Spleen (tissue), 13 donors: ENCODE measurements at regions of chr18 and their contacts with region 1.

Region 1: GRCh38 chr18:46073474-46074331 is 1.6 kb upstream of the PSTPIP2 start:
- DNase-seq: peak; percentile 50
- H3K4me3 ChIP-seq: peak overlapping the region in 1 of 8 donors; percentile 92
- H3K27ac ChIP-seq: peak overlapping the region in 6 of 8 donors; percentile 92 to 97 (median 94)
- H3K4me1 ChIP-seq: peaks cover 12 to 55% (median 46%) of the 10 kb centered on the region in 6 donors
- H3K27me3 ChIP-seq: peaks cover 0 to 20% (median 0%) of the 10 kb centered on the region in 7 donors
- CTCF ChIP-seq: peak; percentile 38 to 83 (median 72)
- POLR2A ChIP-seq: no peak

Region 2: GRCh38 chr18:45335282-45336043 is 738.2 kb before region 1 on chr18:
- intact Hi-C with region 1: no loop called
- DNase-seq: no peak
- H3K4me3 ChIP-seq: no peak overlapping the region
- H3K27ac ChIP-seq: no peak overlapping the region
- H3K4me1 ChIP-seq: no peaks in the 10 kb centered on the region
- H3K27me3 ChIP-seq: no peaks in the 10 kb centered on the region
- CTCF ChIP-seq: no peak
- POLR2A ChIP-seq: no peak

Region 3: DNA sequence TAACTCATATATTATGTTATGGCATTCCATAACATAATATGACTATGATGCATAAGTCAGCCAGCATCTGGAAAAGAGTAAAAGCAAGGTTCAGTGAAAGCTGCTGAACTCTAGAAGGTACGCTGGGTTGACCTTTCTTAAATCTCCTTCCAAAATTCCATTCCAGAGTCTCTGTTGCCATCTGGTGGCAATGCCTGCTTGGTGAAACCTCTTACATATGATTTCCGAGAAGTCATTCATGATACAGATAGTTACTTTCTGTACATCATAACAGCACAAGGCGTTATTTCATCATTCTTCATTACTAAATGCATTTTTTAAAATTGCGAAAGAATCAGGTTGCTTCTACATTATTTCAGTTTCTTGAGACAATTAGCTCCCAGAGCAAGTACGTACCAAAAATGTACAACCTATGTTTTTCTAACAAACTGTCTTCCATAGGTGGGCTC is 99.6 kb before region 1 on chr18:
- intact Hi-C with region 1: loop called (anchors 10 kb)
- DNase-seq: no peak
- H3K4me3 ChIP-seq: peak overlapping the region in 1 of 8 donors; percentile 3
- H3K27ac ChIP-seq: peak overlapping the region in 7 of 8 donors; percentile 33 to 82 (median 59)
- H3K4me1 ChIP-seq: peaks cover 4 to 37% (median 10%) of the 10 kb centered on the region in 6 donors
- H3K27me3 ChIP-seq: no peaks in the 10 kb centered on the region
- CTCF ChIP-seq: peak; percentile 50 to 92 (median 77)
- POLR2A ChIP-seq: no peak

Region 4: DNA sequence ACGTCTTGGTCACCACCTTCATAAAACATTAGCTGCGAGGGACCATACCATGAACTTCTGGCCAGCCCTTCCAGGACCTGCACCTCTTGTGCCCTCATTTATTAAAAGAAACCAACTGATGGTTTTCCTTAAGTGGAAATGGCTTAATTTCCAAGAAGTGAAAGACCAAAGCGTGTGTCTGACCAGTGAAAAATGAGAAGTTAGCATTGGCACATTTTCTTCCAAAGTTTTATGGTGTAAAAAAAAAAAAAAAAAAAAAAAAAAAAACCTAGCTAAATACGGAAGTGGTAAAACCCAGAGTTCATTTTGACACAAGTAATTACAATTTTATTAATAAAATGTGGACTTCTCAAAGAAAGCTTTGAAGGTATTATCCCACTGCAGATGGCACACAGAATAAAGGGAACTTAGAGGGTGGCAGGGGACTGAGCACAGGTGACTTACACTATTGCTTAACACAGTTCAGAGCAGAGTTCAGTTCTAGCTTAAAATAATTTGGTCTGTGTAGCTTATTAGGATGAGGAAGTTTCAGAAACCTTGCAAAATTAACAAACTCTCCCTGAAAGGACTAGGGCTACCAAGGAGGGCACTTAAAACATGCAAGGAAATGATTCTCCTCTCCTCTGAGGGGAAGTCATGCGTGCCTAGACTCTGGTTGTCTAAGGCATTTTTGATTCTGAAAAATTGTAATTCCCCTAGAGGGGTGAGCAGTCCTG is 64.4 kb before region 1 on chr18:
- intact Hi-C with region 1: no loop called
- DNase-seq: no peak
- H3K4me3 ChIP-seq: peak overlapping the region in 1 of 8 donors; percentile 21
- H3K27ac ChIP-seq: peak overlapping the region in 7 of 8 donors; percentile 53 to 88 (median 82)
- H3K4me1 ChIP-seq: peaks cover 0 to 60% (median 27%) of the 10 kb centered on the region in 6 donors
- H3K27me3 ChIP-seq: no peaks in the 10 kb centered on the region
- CTCF ChIP-seq: no peak
- POLR2A ChIP-seq: no peak

Region 5: GRCh38 chr18:46677611-46678010 is 603.9 kb after region 1 on chr18:
- intact Hi-C with region 1: no loop called
- DNase-seq: no peak
- H3K4me3 ChIP-seq: no peak overlapping the region
- H3K27ac ChIP-seq: no peak overlapping the region
- H3K4me1 ChIP-seq: peaks cover 0 to 2% (median 0%) of the 10 kb centered on the region in 6 donors
- H3K27me3 ChIP-seq: peaks cover 0 to 14% (median 0%) of the 10 kb centered on the region in 7 donors
- CTCF ChIP-seq: no peak
- POLR2A ChIP-seq: no peak